A549 (cell line): ENCODE measurements at regions of chr19 and their contacts with region 1.

Region 1: GRCh38 chr19:42132851-42133528 is 744 bp upstream of the POU2F2 start:
- DNase-seq: peak; percentile 61 to 95
- ATAC-seq: peak; percentile 74 to 90
- H3K4me3 ChIP-seq: peak overlapping the region; percentile 35
- H3K27ac ChIP-seq: peak overlapping the region; percentile 15 to 53; a peak in 4 of 6 replicates
- H3K4me1 ChIP-seq: peaks cover 9% of the 10 kb centered on the region; the same call in 2 of the 3 replicates
- CTCF ChIP-seq: peak; percentile 100
- EP300 ChIP-seq: no peak
- POLR2A ChIP-seq: no peak
- RAD21 ChIP-seq: peak; percentile 99 to 100

Region 2: DNA sequence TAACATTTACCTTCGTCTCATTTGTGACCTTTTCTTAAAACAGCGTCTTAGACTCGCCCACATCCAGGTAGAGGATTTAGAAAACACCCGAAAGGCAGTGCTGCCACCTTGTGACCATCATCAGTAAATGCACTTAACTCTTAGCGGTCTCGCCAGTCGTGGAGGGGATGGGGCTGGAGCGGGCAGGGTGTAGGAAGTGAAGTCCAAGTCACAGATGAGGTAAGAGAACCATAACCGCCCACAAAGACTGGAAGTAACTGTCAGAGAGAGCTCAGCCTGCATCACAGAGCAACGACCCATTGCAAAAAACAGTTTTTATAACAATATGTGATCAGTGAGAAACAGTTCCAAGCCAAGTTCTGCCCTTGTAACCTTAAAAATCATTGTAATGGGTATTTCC is 347.3 kb before region 1 on chr19:
- CTCF ChIA-PET with region 1: no interaction called
- POLR2A ChIA-PET with region 1: no interaction called
- DNase-seq: peak; percentile 93 to 99
- ATAC-seq: peak; percentile 74 to 92
- H3K4me3 ChIP-seq: no peak overlapping the region
- H3K27ac ChIP-seq: no peak overlapping the region
- H3K4me1 ChIP-seq: peaks cover 5% of the 10 kb centered on the region; the same call in 1 of the 3 replicates
- CTCF ChIP-seq: peak; percentile 99
- EP300 ChIP-seq: no peak
- POLR2A ChIP-seq: no peak
- RAD21 ChIP-seq: peak; percentile 80 to 88

Region 3: DNA sequence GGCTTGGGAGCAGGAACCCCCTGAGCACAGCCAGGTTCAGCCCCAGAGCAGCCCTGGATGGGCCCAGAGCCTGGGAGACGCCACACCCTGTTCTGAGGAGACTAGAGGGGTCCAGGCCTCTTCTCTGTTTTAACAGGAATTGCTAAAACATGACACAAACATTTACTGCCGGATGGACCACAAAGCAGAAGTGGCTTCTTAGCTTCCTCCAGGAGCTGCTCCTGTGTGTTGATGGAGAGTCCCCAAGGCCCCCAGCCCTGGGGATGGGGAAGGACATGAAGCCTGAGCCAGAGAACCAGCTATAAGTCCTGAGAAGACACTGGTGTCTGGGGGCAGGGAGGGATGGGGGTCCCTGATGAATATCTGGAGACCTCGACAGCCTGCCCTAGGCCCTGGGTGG is 322.0 kb before region 1 on chr19:
- CTCF ChIA-PET with region 1: no interaction called
- POLR2A ChIA-PET with region 1: no interaction called
- DNase-seq: no peak
- ATAC-seq: no peak
- H3K4me3 ChIP-seq: no peak overlapping the region
- H3K27ac ChIP-seq: no peak overlapping the region
- H3K4me1 ChIP-seq: no peaks in the 10 kb centered on the region
- CTCF ChIP-seq: no peak
- EP300 ChIP-seq: no peak
- POLR2A ChIP-seq: no peak
- RAD21 ChIP-seq: no peak

Region 4: GRCh38 chr19:42166316-42166715 is 33.3 kb after region 1 on chr19:
- CTCF ChIA-PET with region 1: interaction called, 27 read pairs
- POLR2A ChIA-PET with region 1: no interaction called
- DNase-seq: no peak
- ATAC-seq: no peak
- H3K4me3 ChIP-seq: no peak overlapping the region
- H3K27ac ChIP-seq: no peak overlapping the region
- H3K4me1 ChIP-seq: no peaks in the 10 kb centered on the region
- CTCF ChIP-seq: no peak
- EP300 ChIP-seq: no peak
- POLR2A ChIP-seq: no peak
- RAD21 ChIP-seq: no peak

Region 5: DNA sequence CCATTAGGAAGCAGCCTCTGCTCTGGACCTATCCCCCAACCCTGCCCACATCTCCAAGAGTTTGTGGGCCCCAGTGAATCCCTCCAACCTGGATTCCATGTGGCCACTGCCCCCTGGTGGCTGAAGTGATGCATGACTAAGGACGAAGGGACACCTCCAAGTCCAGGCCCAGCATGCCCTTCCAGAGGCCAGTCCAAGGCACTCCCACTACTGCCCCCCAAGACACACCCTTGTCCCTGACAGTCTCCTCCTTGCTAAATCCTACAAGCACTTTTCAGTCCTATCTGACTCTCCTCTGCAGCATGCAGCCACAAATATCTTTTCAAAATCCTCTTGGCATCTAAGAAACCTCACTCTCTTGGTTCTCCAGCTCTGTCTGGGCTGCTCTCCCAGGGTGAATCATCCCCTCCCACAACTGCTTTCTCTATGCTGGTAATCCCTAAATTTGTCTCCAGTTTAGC is 51.4 kb after region 1 on chr19:
- CTCF ChIA-PET with region 1: interaction called, 323 read pairs
- POLR2A ChIA-PET with region 1: no interaction called
- DNase-seq: peak; percentile 91 to 96
- ATAC-seq: peak; percentile 77 to 94
- H3K4me3 ChIP-seq: no peak overlapping the region
- H3K27ac ChIP-seq: no peak overlapping the region
- H3K4me1 ChIP-seq: no peaks in the 10 kb centered on the region
- CTCF ChIP-seq: peak; percentile 99
- EP300 ChIP-seq: no peak
- POLR2A ChIP-seq: no peak
- RAD21 ChIP-seq: peak; percentile 94 to 98

Region 6: GRCh38 chr19:42207767-42208271 is 74.8 kb after region 1 on chr19:
- CTCF ChIA-PET with region 1: interaction called, 41 read pairs
- POLR2A ChIA-PET with region 1: no interaction called
- DNase-seq: peak; percentile 70 to 86
- ATAC-seq: peak; percentile 73 to 82
- H3K4me3 ChIP-seq: no peak overlapping the region
- H3K27ac ChIP-seq: peak overlapping the region; percentile 23 to 68; a peak in 5 of 6 replicates
- H3K4me1 ChIP-seq: peaks cover 23% of the 10 kb centered on the region
- CTCF ChIP-seq: no peak
- EP300 ChIP-seq: no peak
- POLR2A ChIP-seq: no peak
- RAD21 ChIP-seq: no peak

Region 7: DNA sequence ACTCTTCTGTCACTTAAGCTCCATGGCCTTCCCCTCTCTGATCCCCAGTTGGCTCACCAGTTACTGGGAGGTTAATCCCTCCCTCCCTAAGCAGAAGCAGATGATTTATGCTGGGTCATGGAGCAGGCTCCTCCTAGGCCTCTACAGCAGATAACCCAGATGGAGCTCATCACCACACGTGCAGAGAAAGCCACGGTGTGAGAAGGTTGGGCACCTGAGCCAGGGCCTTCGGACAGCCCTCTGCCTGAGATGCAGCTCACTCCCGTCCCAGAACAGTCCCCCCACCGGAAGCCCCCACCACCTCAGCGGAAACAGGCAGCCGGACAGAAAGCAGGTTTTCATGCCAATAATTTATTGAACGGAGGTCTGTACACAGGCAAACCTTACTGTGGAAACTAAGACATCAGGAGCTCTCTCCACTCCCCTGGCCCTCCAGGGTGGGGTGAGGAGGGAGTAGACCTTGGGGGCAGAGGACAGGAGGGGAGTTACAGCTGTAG is 96.9 kb after region 1 on chr19:
- CTCF ChIA-PET with region 1: interaction called, 16 read pairs
- POLR2A ChIA-PET with region 1: no interaction called
- DNase-seq: peak in 1 of 2 experiments; percentile 65
- ATAC-seq: peak; percentile 36 to 56; a peak in 5 of 6 replicates
- H3K4me3 ChIP-seq: no peak overlapping the region
- H3K27ac ChIP-seq: peak overlapping the region in 1 of 2 experiments; percentile 29; a peak in 3 of 6 replicates
- H3K4me1 ChIP-seq: peaks cover 11% of the 10 kb centered on the region; the same call in 2 of the 3 replicates
- CTCF ChIP-seq: no peak
- EP300 ChIP-seq: no peak
- POLR2A ChIP-seq: no peak
- RAD21 ChIP-seq: no peak

Region 8: GRCh38 chr19:42290523-42291438 is 157.8 kb after region 1 on chr19:
- CTCF ChIA-PET with region 1: interaction called, 15 read pairs
- POLR2A ChIA-PET with region 1: no interaction called
- DNase-seq: peak; percentile 79 to 95
- ATAC-seq: peak; percentile 48 to 83
- H3K4me3 ChIP-seq: no peak overlapping the region
- H3K27ac ChIP-seq: no peak overlapping the region
- H3K4me1 ChIP-seq: peaks cover 16% of the 10 kb centered on the region
- CTCF ChIP-seq: peak; percentile 88
- EP300 ChIP-seq: no peak
- POLR2A ChIP-seq: no peak; the same call in 1 of the 2 replicates
- RAD21 ChIP-seq: peak; percentile 76 to 78; a peak in 4 of 5 replicates

Region 9: GRCh38 chr19:42325896-42326771 is 193.1 kb after region 1 on chr19:
- CTCF ChIA-PET with region 1: interaction called, 11 read pairs
- POLR2A ChIA-PET with region 1: no interaction called
- DNase-seq: peak in 1 of 2 experiments; percentile 59
- ATAC-seq: peak; percentile 46 to 64
- H3K4me3 ChIP-seq: peak overlapping the region; percentile 75
- H3K27ac ChIP-seq: peak overlapping the region; percentile 85 to 90
- H3K4me1 ChIP-seq: peaks cover 19% of the 10 kb centered on the region; the same call in 2 of the 3 replicates
- CTCF ChIP-seq: peak; percentile 43
- EP300 ChIP-seq: no peak
- POLR2A ChIP-seq: peak; percentile 7; the same call in 1 of the 2 replicates
- RAD21 ChIP-seq: no peak